ENCODE measurements at regions of chr11 and their contacts with region 1.

Region 1: DNA sequence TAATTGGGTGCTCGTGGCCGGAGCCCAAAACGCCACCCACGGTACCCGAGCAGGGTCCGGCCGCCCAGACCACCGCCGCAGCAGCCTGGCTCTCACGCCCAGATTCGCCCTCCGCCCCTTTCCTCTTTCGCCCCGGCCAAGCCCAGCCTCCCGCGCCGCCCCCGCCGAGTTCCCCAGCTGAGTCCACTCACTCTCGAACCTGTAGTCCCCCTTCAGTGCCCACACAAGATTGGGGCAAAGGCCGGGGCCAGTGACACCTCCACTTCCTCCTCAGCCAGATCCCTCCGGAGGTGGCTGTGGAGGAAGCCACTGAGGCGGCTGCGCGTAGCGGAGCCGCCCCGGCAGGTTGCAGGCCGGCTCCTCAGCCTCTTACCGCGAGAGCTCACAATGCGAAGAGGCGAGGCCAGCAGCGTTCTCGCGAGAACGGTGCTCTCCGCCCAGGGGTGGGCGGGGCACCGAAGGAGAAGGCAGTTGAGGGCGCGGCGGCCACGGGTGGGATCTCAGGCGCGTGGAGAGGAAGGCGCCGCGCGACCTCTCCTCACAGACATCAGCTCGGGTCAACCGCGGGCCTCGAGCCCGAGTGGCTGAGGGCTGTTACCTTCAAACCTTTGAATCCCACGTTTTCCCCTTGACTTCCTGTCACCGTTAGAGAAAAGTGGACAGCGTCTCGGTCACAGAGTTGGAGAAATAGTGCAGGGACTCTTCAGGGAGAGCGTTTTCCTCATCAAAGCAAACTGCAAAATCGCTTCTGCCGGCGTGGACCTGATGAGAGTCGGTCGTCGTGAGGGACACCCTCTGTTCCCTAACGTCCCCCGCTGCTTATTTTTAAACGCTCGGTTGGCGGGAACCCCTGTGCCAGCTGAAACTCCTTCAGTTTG is at the start of gene BTBD10:
- DNase-seq: peak; percentile 95
- H3K4me3 ChIP-seq: peak within 1 kb of the TSS; percentile 75
- H3K27ac ChIP-seq: peak within 1 kb of the TSS; percentile 93
- H3K4me1 ChIP-seq: no peaks in the 10 kb centered on the region
- H3K27me3 ChIP-seq: no peaks in the 10 kb centered on the region
- CTCF ChIP-seq: no peak
- total RNA-seq, gene BTBD10: 31.8 to 34.5 TPM

Region 2: DNA sequence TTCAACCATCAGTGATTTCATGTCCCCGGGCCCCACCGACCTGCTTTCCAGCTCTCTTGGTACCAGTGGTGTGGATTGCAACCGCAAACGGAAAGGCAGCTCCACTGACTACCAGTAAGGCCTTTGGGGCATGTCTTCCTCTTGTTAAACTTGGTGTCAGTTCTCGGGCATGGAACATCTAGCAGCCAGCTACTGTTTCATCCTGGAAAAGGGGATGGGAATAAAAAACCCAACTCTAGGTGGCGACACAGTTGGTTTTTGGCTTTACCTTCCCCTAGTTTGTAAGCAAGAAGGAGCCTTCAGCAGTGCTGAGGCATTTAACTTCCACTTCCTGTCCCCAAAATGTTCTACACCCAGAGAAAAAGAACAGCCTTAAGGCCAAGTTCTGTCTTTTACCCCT is 108.8 kb before region 1 on chr11:
- intact Hi-C with region 1: loop called (anchors 10 kb)
- DNase-seq: no peak
- H3K4me3 ChIP-seq: no peak overlapping the region
- H3K27ac ChIP-seq: no peak overlapping the region
- H3K4me1 ChIP-seq: no peaks in the 10 kb centered on the region
- H3K27me3 ChIP-seq: no peaks in the 10 kb centered on the region
- CTCF ChIP-seq: peak; percentile 24